HepG2 (cell line): ENCODE measurements at regions of chr9 and their contacts with region 1.

Region 1: GRCh38 chr9:108621991-108622855 is 233.6 kb downstream of the ACTL7B start:
- DNase-seq: no peak
- ATAC-seq: no peak
- H3K4me3 ChIP-seq: no peak overlapping the region
- H3K27ac ChIP-seq: no peak overlapping the region
- H3K4me1 ChIP-seq: no peaks in the 10 kb centered on the region
- H3K27me3 ChIP-seq: 0 out of 5 replicates have a peak, but pooled peaks cover 0 to 3% of the 10 kb centered on the region in 2 experiments
- CTCF ChIP-seq: no peak
- EP300 ChIP-seq: no peak
- POLR2A ChIP-seq: no peak
- RAD21 ChIP-seq: no peak

Region 2: DNA sequence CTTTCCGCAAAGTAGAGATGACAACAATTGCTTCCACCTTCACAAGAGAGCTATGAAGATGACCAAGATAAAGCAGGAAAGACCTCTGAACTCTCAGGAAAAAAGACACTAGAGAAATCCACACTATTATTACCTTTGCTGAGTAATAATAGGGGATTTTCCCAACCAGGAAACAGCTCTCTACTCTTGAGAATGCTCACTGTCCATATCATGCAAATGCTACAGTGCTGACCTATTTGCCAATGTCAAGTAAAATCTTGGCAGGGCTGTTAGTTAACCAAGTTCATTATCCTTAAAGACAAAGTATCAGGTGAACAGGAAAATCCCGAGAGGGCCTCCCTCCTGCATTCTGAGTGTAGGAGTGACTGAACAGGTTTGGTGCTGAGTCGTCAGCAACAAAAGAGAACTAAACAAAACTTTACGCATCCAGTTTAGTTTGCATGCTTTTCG is 73.0 kb before region 1 on chr9:
- CTCF ChIA-PET with region 1: no interaction called
- POLR2A ChIA-PET with region 1: no interaction called
- in situ Hi-C with region 1: no loop called
- intact Hi-C with region 1: loop called (anchors 2 kb)
- DNase-seq: no peak
- ATAC-seq: no peak
- H3K4me3 ChIP-seq: no peak overlapping the region
- H3K27ac ChIP-seq: no peak overlapping the region
- H3K4me1 ChIP-seq: no peaks in the 10 kb centered on the region
- H3K27me3 ChIP-seq: peaks cover 0 to 4% of the 10 kb centered on the region in 2 experiments; a peak in 2 of 5 replicates
- CTCF ChIP-seq: no peak
- EP300 ChIP-seq: no peak
- POLR2A ChIP-seq: no peak
- RAD21 ChIP-seq: no peak

Region 3: DNA sequence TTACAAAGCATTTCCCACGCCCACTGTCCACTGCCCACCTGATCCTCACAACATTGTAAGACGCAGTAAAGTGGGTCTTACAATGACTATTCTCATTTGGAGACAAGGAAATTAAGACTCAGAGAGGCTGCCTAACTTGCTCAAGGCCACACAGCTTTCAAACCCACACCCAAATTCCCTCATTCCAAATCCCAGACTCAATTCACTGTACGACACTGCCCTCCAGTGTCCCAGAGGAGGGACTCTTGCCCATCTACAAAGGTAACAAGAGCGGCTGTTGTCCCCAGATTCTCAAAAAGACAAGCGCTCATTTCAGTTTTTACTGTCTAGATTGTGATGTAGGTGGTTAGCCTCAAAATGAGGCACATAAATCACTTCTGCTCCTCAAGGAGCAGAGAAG is 49.0 kb after region 1 on chr9:
- CTCF ChIA-PET with region 1: no interaction called
- POLR2A ChIA-PET with region 1: no interaction called
- in situ Hi-C with region 1: no loop called
- intact Hi-C with region 1: no loop called
- DNase-seq: peak; percentile 17
- ATAC-seq: peak; percentile 53; the same call in 2 of the 3 replicates
- H3K4me3 ChIP-seq: no peak overlapping the region
- H3K27ac ChIP-seq: no peak overlapping the region
- H3K4me1 ChIP-seq: no peaks in the 10 kb centered on the region
- H3K27me3 ChIP-seq: peaks cover 1 to 4% of the 10 kb centered on the region in 2 experiments; a peak in 3 of 5 replicates
- CTCF ChIP-seq: peak; percentile 61
- EP300 ChIP-seq: no peak
- POLR2A ChIP-seq: no peak
- RAD21 ChIP-seq: peak; percentile 26; the same call in 1 of the 2 replicates